ENCODE measurements at regions of chr10 and their contacts with region 1.

Region 1: GRCh38 chr10:13787015-13787421 is 200.3 kb downstream of the PRPF18 start:
- DNase-seq: peak; percentile 94
- H3K4me3 ChIP-seq: no peak overlapping the region
- H3K27ac ChIP-seq: peak overlapping the region; percentile 96
- H3K4me1 ChIP-seq: peaks cover 57% of the 10 kb centered on the region
- H3K27me3 ChIP-seq: no peaks in the 10 kb centered on the region
- CTCF ChIP-seq: no peak
- POLR2A ChIP-seq: peak; percentile 48

Region 2: DNA sequence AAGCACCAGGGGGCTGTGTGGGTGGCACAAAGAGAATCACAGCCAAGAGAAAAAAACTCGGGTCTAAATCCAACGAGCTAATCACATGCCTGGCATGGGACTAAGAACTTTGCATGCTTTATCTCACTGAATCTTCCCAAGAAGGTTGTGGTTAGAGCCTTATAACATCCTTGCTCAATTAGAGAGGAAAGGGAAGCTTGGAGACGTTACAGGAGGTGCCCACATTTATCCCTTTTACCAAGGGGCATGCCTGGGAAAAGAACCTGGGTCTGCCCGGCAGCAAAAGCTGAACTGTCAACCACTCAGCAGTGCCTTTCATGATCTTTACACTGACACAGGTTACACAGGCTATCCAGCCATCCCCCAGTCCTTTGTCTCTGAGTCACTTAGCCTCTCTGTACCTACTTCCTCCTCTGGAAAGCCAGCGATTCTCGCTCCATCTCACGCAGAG is 10.1 kb before region 1 on chr10:
- CTCF ChIA-PET with region 1: interaction called, 11 read pairs
- POLR2A ChIA-PET with region 1: no interaction called
- dilution Hi-C with region 1: no loop called
- intact Hi-C with region 1: no loop called
- DNase-seq: no peak
- H3K4me3 ChIP-seq: no peak overlapping the region
- H3K27ac ChIP-seq: peak overlapping the region; percentile 76
- H3K4me1 ChIP-seq: peaks cover 46% of the 10 kb centered on the region
- H3K27me3 ChIP-seq: no peaks in the 10 kb centered on the region
- CTCF ChIP-seq: no peak
- POLR2A ChIP-seq: no peak

Region 3: DNA sequence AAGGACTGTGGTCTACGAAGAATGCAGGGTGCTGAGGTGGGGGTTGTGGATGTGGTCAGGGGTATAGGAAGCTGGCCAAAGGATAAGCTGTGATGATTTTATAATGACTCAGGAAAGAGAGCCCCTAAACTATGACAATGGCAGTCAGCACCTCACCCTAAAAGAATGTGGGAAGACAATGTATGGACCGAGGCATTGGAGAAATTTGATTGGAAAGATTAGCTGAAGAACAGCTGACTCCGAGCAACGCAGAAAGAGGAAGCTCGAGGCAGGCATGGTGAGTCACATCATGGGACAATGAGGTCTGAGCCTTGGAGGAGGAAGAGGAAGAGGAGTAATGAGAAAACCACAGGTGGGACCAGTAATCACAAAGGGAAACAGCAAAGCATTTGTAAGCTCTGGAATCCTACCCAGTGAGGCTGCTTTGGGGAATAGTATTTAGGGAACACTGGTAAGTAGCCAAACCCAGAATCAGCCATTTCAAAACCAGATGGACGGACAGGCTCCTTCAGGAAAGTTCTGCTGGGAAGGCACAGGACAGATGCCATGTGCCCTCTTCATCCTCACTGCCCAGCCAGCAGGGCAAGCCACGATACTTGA is 95.2 kb after region 1 on chr10:
- CTCF ChIA-PET with region 1: interaction called, 18 read pairs
- POLR2A ChIA-PET with region 1: interaction called, 5 read pairs
- dilution Hi-C with region 1: no loop called
- intact Hi-C with region 1: loop called (anchors 1 kb)
- DNase-seq: peak; percentile 96
- H3K4me3 ChIP-seq: no peak overlapping the region
- H3K27ac ChIP-seq: peak overlapping the region; percentile 99
- H3K4me1 ChIP-seq: peaks cover 71% of the 10 kb centered on the region
- H3K27me3 ChIP-seq: no peaks in the 10 kb centered on the region
- CTCF ChIP-seq: no peak
- POLR2A ChIP-seq: peak; percentile 68

Region 4: GRCh38 chr10:13930120-13930519 is 143.1 kb after region 1 on chr10:
- CTCF ChIA-PET with region 1: no interaction called
- POLR2A ChIA-PET with region 1: no interaction called
- dilution Hi-C with region 1: no loop called
- intact Hi-C with region 1: no loop called
- DNase-seq: no peak
- H3K4me3 ChIP-seq: no peak overlapping the region
- H3K27ac ChIP-seq: no peak overlapping the region
- H3K4me1 ChIP-seq: peaks cover 6% of the 10 kb centered on the region
- H3K27me3 ChIP-seq: no peaks in the 10 kb centered on the region
- CTCF ChIP-seq: no peak
- POLR2A ChIP-seq: no peak

Region 5: DNA sequence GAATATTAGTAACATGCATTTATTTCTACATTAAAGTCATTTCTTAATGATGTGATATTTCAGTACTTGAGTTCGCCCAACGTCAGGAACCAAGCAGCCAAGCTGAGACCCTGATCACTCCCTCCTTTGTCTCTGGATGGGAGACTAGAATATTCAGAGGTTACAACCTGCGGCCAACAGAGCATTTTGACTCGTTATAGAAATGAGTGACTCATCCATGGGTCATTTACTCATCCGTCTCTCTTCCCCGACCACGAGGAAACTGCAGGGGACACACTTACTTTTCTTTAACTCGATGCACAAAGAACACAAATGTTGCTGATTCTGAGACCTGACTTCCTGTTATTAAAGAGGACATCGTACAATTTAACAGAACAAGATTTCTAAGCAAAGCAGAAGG is 200.4 kb after region 1 on chr10:
- CTCF ChIA-PET with region 1: no interaction called
- POLR2A ChIA-PET with region 1: no interaction called
- dilution Hi-C with region 1: no loop called
- intact Hi-C with region 1: loop called (anchors 1 kb)
- DNase-seq: peak; percentile 73
- H3K4me3 ChIP-seq: no peak overlapping the region
- H3K27ac ChIP-seq: peak overlapping the region; percentile 71
- H3K4me1 ChIP-seq: peaks cover 76% of the 10 kb centered on the region
- H3K27me3 ChIP-seq: no peaks in the 10 kb centered on the region
- CTCF ChIP-seq: no peak
- POLR2A ChIP-seq: no peak

Region 6: DNA sequence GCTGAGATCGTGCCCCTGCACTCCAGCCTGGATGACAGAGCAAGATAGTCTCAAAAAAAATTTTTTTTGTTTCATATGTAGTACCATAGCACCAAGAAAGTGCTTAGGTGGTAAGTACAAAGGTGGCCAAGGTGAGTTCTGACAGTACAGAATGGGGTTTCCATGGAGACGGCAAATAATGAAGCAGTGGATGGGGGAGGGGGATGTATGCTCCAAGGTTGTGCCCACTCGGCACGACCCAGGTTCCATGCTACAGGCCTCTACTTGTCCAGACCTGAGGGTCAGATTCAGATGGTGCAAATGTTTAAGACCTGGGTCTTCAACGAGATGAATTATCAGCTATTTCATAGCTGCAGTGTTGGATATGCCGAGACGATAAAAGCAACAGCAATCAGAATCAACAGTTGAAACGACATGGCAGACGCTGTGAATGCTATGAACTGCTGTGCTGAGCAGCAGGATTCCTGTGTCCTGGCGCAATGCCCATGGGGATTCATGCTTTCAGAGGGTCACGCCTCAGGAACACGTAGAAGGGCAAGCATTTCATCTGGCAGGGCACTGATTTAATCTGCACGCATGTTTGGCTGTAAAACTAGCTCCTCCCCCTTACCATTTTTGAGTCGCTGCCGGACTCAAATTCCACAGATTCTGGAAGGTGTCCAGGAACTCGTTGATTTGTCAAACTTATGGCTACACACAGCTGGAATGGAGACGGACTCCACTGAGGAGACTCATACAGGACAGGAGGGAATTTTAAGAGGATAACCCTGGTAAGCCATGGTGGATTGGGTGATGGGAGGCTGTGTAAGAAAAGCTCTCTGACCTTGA is 287.3 kb after region 1 on chr10:
- CTCF ChIA-PET with region 1: interaction called, 6 read pairs
- POLR2A ChIA-PET with region 1: interaction called, 3 read pairs
- dilution Hi-C with region 1: no loop called
- intact Hi-C with region 1: loop called (anchors 1 kb)
- DNase-seq: peak; percentile 98
- H3K4me3 ChIP-seq: no peak overlapping the region
- H3K27ac ChIP-seq: peak overlapping the region; percentile 81
- H3K4me1 ChIP-seq: peaks cover 43% of the 10 kb centered on the region
- H3K27me3 ChIP-seq: no peaks in the 10 kb centered on the region
- CTCF ChIP-seq: no peak
- POLR2A ChIP-seq: no peak

Region 7: GRCh38 chr10:14195433-14195832 is 408.4 kb after region 1 on chr10:
- CTCF ChIA-PET with region 1: interaction called, 12 read pairs
- POLR2A ChIA-PET with region 1: no interaction called
- dilution Hi-C with region 1: no loop called
- intact Hi-C with region 1: no loop called
- DNase-seq: no peak
- H3K4me3 ChIP-seq: no peak overlapping the region
- H3K27ac ChIP-seq: no peak overlapping the region
- H3K4me1 ChIP-seq: no peaks in the 10 kb centered on the region
- H3K27me3 ChIP-seq: peaks cover 24 to 43% of the 10 kb centered on the region in 2 experiments
- CTCF ChIP-seq: no peak
- POLR2A ChIP-seq: no peak

Measured in endothelial cell of umbilical vein (primary cell).